ENCODE measurements at regions of chr10 and their contacts with region 1.

Region 1: GRCh38 chr10:33330543-33331378 is 3.7 kb downstream of the NRP1 start:
- DNase-seq: peak; percentile 91
- H3K4me3 ChIP-seq: peak overlapping the region in 3 of 4 donors; percentile 62 to 80 (median 65)
- H3K27ac ChIP-seq: peak overlapping the region; percentile 34 to 91 (median 88)
- H3K4me1 ChIP-seq: peaks cover 0 to 58% (median 34%) of the 10 kb centered on the region in 4 donors
- H3K27me3 ChIP-seq: no peaks in the 10 kb centered on the region
- CTCF ChIP-seq: peak; percentile 80 to 89 (median 83)
- EP300 ChIP-seq: no peak
- POLR2A ChIP-seq: no peak

Region 2: GRCh38 chr10:33193057-33193700 is 137.6 kb before region 1 on chr10:
- intact Hi-C with region 1: loop called (anchors 5 kb)
- DNase-seq: peak; percentile 91
- H3K4me3 ChIP-seq: no peak overlapping the region
- H3K27ac ChIP-seq: peak overlapping the region in 3 of 4 donors; percentile 10 to 50 (median 32)
- H3K4me1 ChIP-seq: peaks cover 0 to 24% (median 20%) of the 10 kb centered on the region in 4 donors
- H3K27me3 ChIP-seq: no peaks in the 10 kb centered on the region
- CTCF ChIP-seq: peak; percentile 35 to 74 (median 60)
- EP300 ChIP-seq: no peak
- POLR2A ChIP-seq: no peak

Region 3: GRCh38 chr10:33273295-33274002 is 57.3 kb before region 1 on chr10:
- intact Hi-C with region 1: loop called (anchors 5 kb)
- DNase-seq: peak; percentile 94
- H3K4me3 ChIP-seq: peak overlapping the region; percentile 4 to 38 (median 23)
- H3K27ac ChIP-seq: peak overlapping the region; percentile 77 to 87 (median 80)
- H3K4me1 ChIP-seq: peaks cover 0 to 56% (median 35%) of the 10 kb centered on the region in 4 donors
- H3K27me3 ChIP-seq: no peaks in the 10 kb centered on the region
- CTCF ChIP-seq: no peak
- EP300 ChIP-seq: peak in 1 of 4 donors; percentile 30
- POLR2A ChIP-seq: no peak

Region 4: GRCh38 chr10:33314811-33315561 is 15.8 kb before region 1 on chr10:
- intact Hi-C with region 1: loop called (anchors 1 kb)
- DNase-seq: no peak
- H3K4me3 ChIP-seq: no peak overlapping the region
- H3K27ac ChIP-seq: peak overlapping the region in 3 of 4 donors; percentile 20 to 59 (median 43)
- H3K4me1 ChIP-seq: peaks cover 0 to 32% (median 15%) of the 10 kb centered on the region in 4 donors
- H3K27me3 ChIP-seq: no peaks in the 10 kb centered on the region
- CTCF ChIP-seq: no peak
- EP300 ChIP-seq: no peak
- POLR2A ChIP-seq: no peak

Region 5: GRCh38 chr10:33423154-33423529 is 92.4 kb after region 1 on chr10:
- intact Hi-C with region 1: no loop called
- DNase-seq: no peak
- H3K4me3 ChIP-seq: no peak overlapping the region
- H3K27ac ChIP-seq: peak overlapping the region in 1 of 4 donors; percentile 5
- H3K4me1 ChIP-seq: peaks cover 0 to 26% (median 14%) of the 10 kb centered on the region in 4 donors
- H3K27me3 ChIP-seq: no peaks in the 10 kb centered on the region
- CTCF ChIP-seq: no peak
- EP300 ChIP-seq: no peak
- POLR2A ChIP-seq: no peak

Region 6: DNA sequence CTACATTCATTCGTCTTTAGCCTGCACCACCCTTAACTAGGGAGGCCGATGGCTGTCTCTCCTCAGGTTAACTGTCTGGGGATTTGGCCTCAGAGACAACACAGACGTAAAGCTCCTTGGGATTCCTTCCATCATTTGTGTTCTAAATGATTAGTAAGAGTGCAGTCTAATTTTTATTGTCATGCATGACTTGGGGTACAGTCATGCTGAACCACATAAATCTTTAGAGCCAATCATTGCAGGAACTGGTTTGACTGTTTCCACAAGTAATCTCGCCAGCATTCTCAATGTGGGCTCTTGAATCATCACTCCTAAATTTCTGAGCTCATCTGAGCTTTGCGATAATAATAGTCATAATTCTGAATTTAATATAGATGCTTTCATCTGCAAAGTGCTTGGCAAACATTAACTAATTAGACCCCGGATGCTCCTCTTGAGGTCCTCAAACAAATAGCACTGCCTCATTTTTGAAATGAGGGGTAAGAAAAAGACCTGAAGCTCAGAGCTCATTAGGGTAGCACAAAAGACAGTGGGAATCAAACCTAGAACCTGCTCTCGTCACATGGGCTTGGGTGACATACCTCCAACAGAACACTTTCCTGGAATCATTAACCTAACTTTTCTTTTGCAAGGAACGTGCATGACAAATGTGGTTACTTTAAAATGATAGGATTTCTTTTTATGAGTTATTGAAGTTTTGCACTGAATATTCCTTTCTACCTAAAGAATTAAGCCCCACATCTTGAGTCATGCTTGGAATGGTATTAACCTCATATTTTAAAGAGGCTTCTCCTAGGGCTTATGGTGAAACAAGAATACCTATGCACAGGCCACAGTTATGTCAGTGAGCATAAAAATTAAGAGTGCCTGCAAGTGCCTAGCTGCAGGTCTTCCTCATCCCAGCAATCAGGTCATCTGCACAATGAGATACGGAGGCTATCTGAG is 122.6 kb after region 1 on chr10:
- intact Hi-C with region 1: no loop called
- DNase-seq: no peak
- H3K4me3 ChIP-seq: no peak overlapping the region
- H3K27ac ChIP-seq: no peak overlapping the region
- H3K4me1 ChIP-seq: no peaks in the 10 kb centered on the region
- H3K27me3 ChIP-seq: no peaks in the 10 kb centered on the region
- CTCF ChIP-seq: no peak
- EP300 ChIP-seq: no peak
- POLR2A ChIP-seq: no peak

Region 7: GRCh38 chr10:33487014-33487776 is 156.4 kb after region 1 on chr10:
- intact Hi-C with region 1: loop called (anchors 10 kb)
- DNase-seq: no peak
- H3K4me3 ChIP-seq: peak overlapping the region in 2 of 4 donors; percentile 2 to 15
- H3K27ac ChIP-seq: peak overlapping the region; percentile 8 to 64 (median 46)
- H3K4me1 ChIP-seq: peaks cover 0 to 57% (median 31%) of the 10 kb centered on the region in 4 donors
- H3K27me3 ChIP-seq: no peaks in the 10 kb centered on the region
- CTCF ChIP-seq: no peak
- EP300 ChIP-seq: no peak
- POLR2A ChIP-seq: no peak

Region 8: GRCh38 chr10:34102237-34102673 is 771.5 kb after region 1 on chr10:
- intact Hi-C with region 1: loop called (anchors 5 kb)
- DNase-seq: peak; percentile 93
- H3K4me3 ChIP-seq: no peak overlapping the region
- H3K27ac ChIP-seq: peak overlapping the region; percentile 62 to 79 (median 72)
- H3K4me1 ChIP-seq: peaks cover 0 to 22% (median 7%) of the 10 kb centered on the region in 4 donors
- H3K27me3 ChIP-seq: no peaks in the 10 kb centered on the region
- CTCF ChIP-seq: no peak
- EP300 ChIP-seq: no peak
- POLR2A ChIP-seq: no peak

Region 9: GRCh38 chr10:34637418-34637911 is 1306.7 kb after region 1 on chr10:
- intact Hi-C with region 1: loop called (anchors 1 kb)
- DNase-seq: peak; percentile 78
- H3K4me3 ChIP-seq: no peak overlapping the region
- H3K27ac ChIP-seq: no peak overlapping the region
- H3K4me1 ChIP-seq: peaks cover 0 to 55% (median 26%) of the 10 kb centered on the region in 4 donors
- H3K27me3 ChIP-seq: no peaks in the 10 kb centered on the region
- CTCF ChIP-seq: peak; percentile 64 to 97 (median 94)
- EP300 ChIP-seq: no peak
- POLR2A ChIP-seq: no peak

Measured in sigmoid colon (tissue), 7 donors.